ENCODE measurements at regions of chr6 and their contacts with region 1.

Region 1: DNA sequence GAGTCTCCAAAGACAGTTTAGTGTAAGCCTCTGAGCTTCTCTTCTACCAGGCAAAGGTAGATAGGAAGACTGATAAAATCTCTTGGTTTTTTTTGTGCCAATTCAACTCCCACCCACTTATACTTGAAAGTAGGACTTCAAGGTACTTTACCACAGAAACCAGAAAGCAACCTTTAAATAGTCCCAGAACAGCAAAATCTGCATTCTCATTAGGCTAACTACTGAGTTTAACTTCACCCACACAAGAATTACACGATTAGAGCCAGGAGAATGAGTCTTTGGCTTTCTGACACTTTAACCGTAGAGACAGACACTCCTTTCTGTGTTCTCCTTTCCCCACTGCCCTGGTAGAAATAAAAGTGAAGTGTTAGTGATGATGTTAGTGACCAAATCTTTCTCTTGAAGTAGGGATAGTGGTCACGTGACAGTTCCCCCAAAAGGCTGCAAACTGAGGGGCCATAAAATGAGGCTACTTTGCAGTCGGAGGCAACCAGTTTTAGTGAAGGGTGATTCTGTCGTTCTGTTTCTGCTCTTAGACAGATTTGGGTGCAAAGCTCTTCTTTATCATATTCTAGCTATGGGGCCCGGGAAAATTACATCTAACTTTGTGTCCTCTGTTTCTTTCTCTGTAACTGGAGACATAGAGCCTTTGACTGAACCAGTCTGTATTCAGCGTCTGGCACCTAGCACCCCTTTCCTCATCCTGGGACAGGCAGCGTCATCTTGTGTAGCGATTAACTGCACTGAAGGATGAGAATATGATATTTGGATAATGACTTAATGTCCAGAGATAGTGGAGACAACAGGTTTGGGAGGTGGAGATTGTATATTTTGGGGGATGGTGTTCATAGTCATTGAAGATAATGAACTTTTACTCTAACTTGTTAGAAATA is 206.4 kb upstream of the CITED2 start:
- DNase-seq: no peak
- H3K4me3 Mint-ChIP-seq: peak overlapping the region; percentile 24
- H3K27ac Mint-ChIP-seq: peak overlapping the region; percentile 18
- H3K4me1 Mint-ChIP-seq: peaks cover 22% of the 10 kb centered on the region
- H3K27me3 Mint-ChIP-seq: peaks cover 14% of the 10 kb centered on the region

Region 2: DNA sequence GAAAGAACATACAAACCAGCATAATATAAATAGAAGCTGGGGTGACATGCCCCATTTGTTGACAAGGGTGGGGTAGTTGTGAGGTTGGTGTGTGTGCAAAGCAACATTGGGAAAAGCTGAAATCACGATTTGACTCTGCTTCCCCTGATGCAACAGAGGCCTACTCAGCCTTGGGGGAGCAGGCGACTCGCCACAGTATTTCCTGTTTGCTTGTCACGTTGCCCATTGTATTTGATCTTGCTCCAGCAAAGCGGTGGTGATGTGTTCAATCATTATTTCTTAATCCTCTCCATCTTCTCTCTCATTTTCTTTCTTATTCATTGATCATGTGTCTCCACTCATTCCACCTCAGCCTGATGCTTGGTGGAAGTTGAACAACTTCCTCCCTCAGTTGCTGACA is 40.6 kb before region 1 on chr6:
- CTCF ChIA-PET with region 1: no interaction called
- POLR2A ChIA-PET with region 1: interaction called, 4 read pairs
- intact Hi-C with region 1: loop called (anchors 2 kb)
- DNase-seq: peak; percentile 82
- H3K4me3 Mint-ChIP-seq: peak overlapping the region; percentile 38
- H3K27ac Mint-ChIP-seq: peak overlapping the region; percentile 84
- H3K4me1 Mint-ChIP-seq: peaks cover 44% of the 10 kb centered on the region
- H3K27me3 Mint-ChIP-seq: no peaks in the 10 kb centered on the region

Region 3: DNA sequence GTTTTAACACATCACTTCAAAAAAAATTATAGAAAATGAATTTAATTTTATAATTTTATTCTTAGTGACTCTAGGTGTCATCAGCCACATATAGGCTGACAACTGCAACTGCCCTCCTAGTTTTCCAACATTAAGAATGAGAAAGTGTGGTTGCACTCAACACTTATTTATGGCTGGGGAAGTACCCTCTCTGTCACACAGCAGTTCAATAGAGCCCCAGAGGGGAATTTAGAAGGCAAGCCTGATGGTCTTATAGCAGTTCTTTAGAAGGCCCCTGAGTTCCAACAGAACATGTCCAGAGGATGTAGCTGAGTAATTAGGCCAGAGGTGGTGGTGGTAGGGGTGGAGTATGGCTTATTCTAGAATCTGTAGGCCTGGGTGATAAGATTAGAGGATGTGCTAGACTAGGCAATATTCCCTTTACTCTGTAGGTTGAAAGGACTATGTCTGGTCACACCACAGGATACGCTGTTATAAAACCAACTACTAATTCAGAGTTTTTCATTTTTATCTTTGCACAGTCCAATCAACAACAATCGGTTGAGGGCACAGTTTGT is 20.2 kb after region 1 on chr6:
- CTCF ChIA-PET with region 1: interaction called, 3 read pairs
- POLR2A ChIA-PET with region 1: no interaction called
- intact Hi-C with region 1: loop called (anchors 2 kb)
- DNase-seq: peak; percentile 29
- H3K4me3 Mint-ChIP-seq: no peak overlapping the region
- H3K27ac Mint-ChIP-seq: peak overlapping the region; percentile 10
- H3K4me1 Mint-ChIP-seq: peaks cover 7% of the 10 kb centered on the region
- H3K27me3 Mint-ChIP-seq: no peaks in the 10 kb centered on the region

Region 4: GRCh38 chr6:139640448-139640847 is 59.6 kb after region 1 on chr6:
- CTCF ChIA-PET with region 1: no interaction called
- POLR2A ChIA-PET with region 1: no interaction called
- intact Hi-C with region 1: no loop called
- DNase-seq: no peak
- H3K4me3 Mint-ChIP-seq: no peak overlapping the region
- H3K27ac Mint-ChIP-seq: no peak overlapping the region
- H3K4me1 Mint-ChIP-seq: peaks cover 4% of the 10 kb centered on the region
- H3K27me3 Mint-ChIP-seq: peaks cover 10% of the 10 kb centered on the region

Region 5: GRCh38 chr6:139713900-139714514 is 133.2 kb after region 1 on chr6:
- CTCF ChIA-PET with region 1: no interaction called
- POLR2A ChIA-PET with region 1: no interaction called
- intact Hi-C with region 1: no loop called
- DNase-seq: no peak
- H3K4me3 Mint-ChIP-seq: no peak overlapping the region
- H3K27ac Mint-ChIP-seq: no peak overlapping the region
- H3K4me1 Mint-ChIP-seq: no peaks in the 10 kb centered on the region
- H3K27me3 Mint-ChIP-seq: peaks cover 3% of the 10 kb centered on the region